PC-3 (cell line): ENCODE measurements at regions of chr11 and their contacts with region 1.

Region 1: GRCh38 chr11:110195845-110196754 is 100.3 kb downstream of the RDX start:
- DNase-seq: peak; percentile 97
- ATAC-seq: peak; percentile 77
- H3K4me3 ChIP-seq: no peak overlapping the region; the same call in 1 of the 2 replicates
- H3K27ac ChIP-seq: peak overlapping the region; percentile 92
- H3K4me1 ChIP-seq: peaks cover 75% of the 10 kb centered on the region
- H3K27me3 ChIP-seq: no peaks in the 10 kb centered on the region
- CTCF ChIP-seq: no peak

Region 2: DNA sequence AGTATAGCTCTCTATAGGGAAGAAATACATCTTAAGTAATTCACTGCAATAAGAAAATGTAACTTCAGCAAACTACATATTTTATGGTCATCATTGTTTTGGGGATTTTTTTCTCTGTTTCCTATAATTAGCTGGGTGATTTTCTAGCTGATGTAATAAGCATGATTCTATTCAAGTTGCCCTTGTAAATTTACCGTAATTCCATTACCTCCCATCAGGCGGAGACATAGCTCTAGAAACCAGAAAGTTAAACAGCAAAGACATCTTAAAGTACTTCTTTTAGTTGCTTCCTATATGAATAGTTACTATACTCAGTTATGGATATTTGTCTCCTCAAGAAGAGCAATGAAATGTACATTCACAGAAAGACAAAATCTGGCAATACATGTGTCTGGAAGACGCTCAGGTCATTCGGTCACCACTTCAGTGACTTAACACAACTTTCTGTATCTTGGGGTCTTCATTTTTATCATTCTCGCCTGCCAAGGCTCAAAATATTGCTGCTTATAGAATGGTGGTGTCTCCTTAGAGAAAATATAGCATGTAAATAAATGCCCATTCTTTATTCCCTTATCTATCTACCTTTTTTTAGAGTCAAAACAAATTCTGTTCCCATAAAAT is 342.8 kb before region 1 on chr11:
- CTCF ChIA-PET with region 1: no interaction called
- POLR2A ChIA-PET with region 1: no interaction called
- intact Hi-C with region 1: loop called (anchors 2 kb)
- DNase-seq: peak; percentile 88
- ATAC-seq: peak; percentile 57
- H3K4me3 ChIP-seq: no peak overlapping the region
- H3K27ac ChIP-seq: no peak overlapping the region
- H3K4me1 ChIP-seq: peaks cover 12% of the 10 kb centered on the region
- H3K27me3 ChIP-seq: no peaks in the 10 kb centered on the region
- CTCF ChIP-seq: peak; percentile 94

Region 3: DNA sequence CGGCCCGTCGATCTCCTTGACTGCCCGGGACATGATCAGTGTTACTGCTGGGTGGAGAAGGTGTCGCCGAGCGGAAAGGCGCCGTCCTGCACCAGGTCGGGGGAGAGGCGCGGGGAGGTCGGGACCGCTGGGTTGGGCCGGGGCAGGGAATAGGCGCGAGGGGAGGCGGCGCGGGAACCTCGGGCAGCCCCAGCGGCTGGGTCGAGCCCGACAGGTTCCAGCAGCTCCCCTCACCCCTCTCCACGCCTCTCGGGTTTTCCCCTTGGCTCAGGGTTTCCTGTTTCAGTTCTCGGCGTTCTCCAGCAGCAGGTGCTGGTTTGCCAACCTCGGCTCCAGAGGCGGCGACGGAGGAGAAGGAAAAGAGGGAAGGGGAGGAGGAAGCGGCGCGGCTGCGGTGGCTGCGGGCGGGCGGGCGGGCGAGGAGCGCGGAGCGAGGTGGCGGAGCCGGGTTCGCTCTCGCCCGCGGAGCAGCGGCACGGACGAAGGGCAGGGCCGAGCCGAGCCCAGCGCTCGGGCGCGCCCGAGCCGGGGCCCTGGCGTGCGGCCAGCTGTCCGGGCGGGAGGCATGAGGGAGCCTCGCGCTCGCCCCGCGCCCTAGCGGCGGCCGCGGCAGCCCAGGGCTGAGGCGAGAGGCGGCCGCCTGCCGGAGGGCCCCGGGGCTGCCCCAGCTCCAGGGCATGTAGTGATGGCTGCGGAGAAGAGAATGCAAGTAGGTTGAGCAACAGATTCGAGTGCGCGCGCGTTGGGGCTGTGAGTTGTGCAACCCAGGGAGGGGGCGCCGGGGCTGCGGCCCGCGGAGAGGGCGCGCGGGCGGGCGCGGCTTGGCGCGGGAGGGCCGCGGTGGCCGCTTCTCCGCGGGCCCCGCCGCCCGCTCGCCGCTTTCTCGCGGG is 103.3 kb before region 1 on chr11 and contains the start of gene ZC3H12C:
- CTCF ChIA-PET with region 1: no interaction called
- POLR2A ChIA-PET with region 1: interaction called, 5 read pairs
- intact Hi-C with region 1: loop called (anchors 2 kb)
- DNase-seq: peak; percentile 96
- ATAC-seq: peak; percentile 66
- H3K4me3 ChIP-seq: peak within 1 kb of the TSS; percentile 83
- H3K27ac ChIP-seq: peak within 1 kb of the TSS; percentile 95
- H3K4me1 ChIP-seq: peaks cover 42% of the 10 kb centered on the region
- H3K27me3 ChIP-seq: no peaks in the 10 kb centered on the region
- CTCF ChIP-seq: no peak
- total RNA-seq, gene ZC3H12C: 25.2 and 30.7 TPM in 2 replicates

Region 4: GRCh38 chr11:110148775-110149744 is 47.0 kb before region 1 on chr11:
- CTCF ChIA-PET with region 1: no interaction called
- POLR2A ChIA-PET with region 1: no interaction called
- intact Hi-C with region 1: no loop called
- DNase-seq: peak; percentile 90
- ATAC-seq: peak; percentile 89
- H3K4me3 ChIP-seq: no peak overlapping the region
- H3K27ac ChIP-seq: peak overlapping the region; percentile 93
- H3K4me1 ChIP-seq: peaks cover 30% of the 10 kb centered on the region
- H3K27me3 ChIP-seq: no peaks in the 10 kb centered on the region
- CTCF ChIP-seq: no peak

Region 5: DNA sequence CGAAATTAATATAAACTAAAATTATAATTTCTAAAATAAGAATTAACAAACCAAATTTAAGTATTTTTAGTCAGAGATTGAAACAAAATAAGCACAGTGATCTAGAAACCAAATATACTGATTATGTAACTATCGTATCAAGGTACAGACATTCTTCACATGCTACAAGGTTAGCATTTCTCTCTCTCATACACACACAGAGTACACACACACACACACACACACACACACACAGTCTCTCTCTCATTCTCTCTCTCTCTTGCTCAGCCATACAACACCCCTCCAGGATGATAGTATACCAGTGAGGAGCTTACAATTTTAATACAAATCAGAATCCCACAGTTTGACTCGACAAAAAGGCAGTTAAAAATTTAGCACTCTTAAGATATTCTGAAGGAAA is 34.3 kb after region 1 on chr11:
- CTCF ChIA-PET with region 1: no interaction called
- POLR2A ChIA-PET with region 1: no interaction called
- intact Hi-C with region 1: no loop called
- DNase-seq: no peak
- ATAC-seq: no peak
- H3K4me3 ChIP-seq: no peak overlapping the region
- H3K27ac ChIP-seq: no peak overlapping the region
- H3K4me1 ChIP-seq: no peaks in the 10 kb centered on the region
- H3K27me3 ChIP-seq: no peaks in the 10 kb centered on the region
- CTCF ChIP-seq: no peak

Region 6: DNA sequence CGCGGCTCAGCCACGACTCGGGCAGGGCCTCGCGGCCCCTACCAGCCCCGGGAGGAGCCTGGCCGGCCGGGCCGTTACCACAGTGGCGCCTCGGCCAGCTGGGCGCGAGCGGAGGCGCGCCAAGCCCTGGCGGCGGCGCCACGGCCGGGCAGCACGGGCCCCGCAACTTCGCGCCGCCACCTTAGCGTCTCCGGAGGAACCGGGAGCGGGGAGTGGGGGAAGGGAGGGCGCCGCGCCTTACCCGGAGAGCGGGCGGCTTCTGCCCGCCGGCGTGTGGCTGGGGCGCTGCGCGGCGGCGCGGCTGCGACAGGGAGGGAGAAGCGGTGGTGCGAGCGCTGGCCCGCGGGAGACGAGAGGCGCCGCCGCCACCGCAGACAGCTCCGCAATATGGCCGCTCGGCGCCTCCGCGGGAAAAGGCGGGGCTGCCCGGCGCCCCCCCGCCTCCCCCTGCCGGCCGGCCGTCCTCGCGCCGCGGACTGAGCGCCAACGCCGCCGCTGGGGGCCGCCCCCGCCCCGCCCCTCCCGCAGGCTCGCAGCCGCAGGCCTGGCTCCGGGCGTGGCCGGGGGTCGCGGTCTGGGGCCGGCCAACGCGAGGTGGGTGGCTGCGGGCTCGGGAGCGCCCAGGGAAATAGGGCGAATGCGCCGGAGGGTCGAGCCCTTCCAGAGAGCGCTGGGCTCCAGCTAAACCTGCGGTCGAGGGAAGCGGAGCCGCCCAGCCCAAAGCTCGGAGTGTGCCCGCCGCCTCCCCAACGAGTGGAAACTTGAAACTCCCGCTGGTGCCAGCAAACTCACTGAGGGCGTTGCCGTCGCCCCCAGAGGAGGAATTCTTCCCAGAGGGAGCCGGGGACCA is 100.4 kb after region 1 on chr11 and contains the start of gene RDX:
- CTCF ChIA-PET with region 1: interaction called, 8 read pairs
- POLR2A ChIA-PET with region 1: interaction called, 3 read pairs
- intact Hi-C with region 1: loop called (anchors 2 kb)
- DNase-seq: peak; percentile 88
- ATAC-seq: peak; percentile 72
- H3K4me3 ChIP-seq: peak within 1 kb of the TSS; percentile 97
- H3K27ac ChIP-seq: peak within 1 kb of the TSS; percentile 91
- H3K4me1 ChIP-seq: peaks cover 48% of the 10 kb centered on the region
- H3K27me3 ChIP-seq: no peaks in the 10 kb centered on the region
- CTCF ChIP-seq: no peak
- total RNA-seq, gene RDX: 86.2 and 131 TPM in 2 replicates

Region 7: DNA sequence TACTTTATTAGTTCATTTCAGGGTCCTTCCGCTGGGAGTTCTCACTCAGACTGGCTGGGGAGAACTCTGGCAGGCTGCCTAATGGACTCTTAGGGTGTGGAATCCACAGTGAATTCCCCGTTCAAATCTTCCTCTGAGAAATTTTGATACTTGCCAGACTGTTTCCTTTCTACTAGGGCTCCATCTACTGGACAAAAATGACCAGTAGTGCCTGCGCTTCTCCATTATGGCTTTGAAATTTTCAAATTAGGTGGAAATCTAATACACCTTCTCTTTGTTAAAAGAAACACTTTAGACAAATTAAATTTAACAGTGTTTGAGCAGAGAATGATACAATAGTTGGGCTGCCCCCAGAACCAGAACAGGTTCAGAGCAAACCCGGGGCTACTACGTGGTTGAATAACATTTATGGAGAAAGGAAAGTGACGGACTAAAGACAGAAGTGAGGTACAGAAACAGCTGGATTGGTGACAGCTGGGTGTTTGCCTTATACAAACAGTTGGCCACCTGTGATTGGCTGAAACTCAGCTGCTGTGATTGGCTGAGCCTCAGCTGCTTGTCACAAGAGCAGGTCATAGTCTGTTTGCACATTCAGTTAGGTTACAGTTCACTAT is 180.7 kb after region 1 on chr11:
- CTCF ChIA-PET with region 1: interaction called, 13 read pairs
- POLR2A ChIA-PET with region 1: no interaction called
- intact Hi-C with region 1: loop called (anchors 1 kb)
- DNase-seq: peak; percentile 91
- ATAC-seq: peak; percentile 84
- H3K4me3 ChIP-seq: peak overlapping the region; percentile 65
- H3K27ac ChIP-seq: 0 out of 2 replicates have a peak overlapping the region, but pooled peaks have one; percentile 9
- H3K4me1 ChIP-seq: peaks cover 21% of the 10 kb centered on the region
- H3K27me3 ChIP-seq: no peaks in the 10 kb centered on the region
- CTCF ChIP-seq: peak; percentile 98

Region 8: GRCh38 chr11:110447897-110448745 is 252.0 kb after region 1 on chr11:
- CTCF ChIA-PET with region 1: no interaction called
- POLR2A ChIA-PET with region 1: no interaction called
- intact Hi-C with region 1: loop called (anchors 5 kb)
- DNase-seq: peak; percentile 88
- ATAC-seq: peak; percentile 49; the same call in 1 of the 2 replicates
- H3K4me3 ChIP-seq: no peak overlapping the region
- H3K27ac ChIP-seq: peak overlapping the region; percentile 79
- H3K4me1 ChIP-seq: peaks cover 21% of the 10 kb centered on the region
- H3K27me3 ChIP-seq: no peaks in the 10 kb centered on the region
- CTCF ChIP-seq: peak; percentile 90

Region 9: DNA sequence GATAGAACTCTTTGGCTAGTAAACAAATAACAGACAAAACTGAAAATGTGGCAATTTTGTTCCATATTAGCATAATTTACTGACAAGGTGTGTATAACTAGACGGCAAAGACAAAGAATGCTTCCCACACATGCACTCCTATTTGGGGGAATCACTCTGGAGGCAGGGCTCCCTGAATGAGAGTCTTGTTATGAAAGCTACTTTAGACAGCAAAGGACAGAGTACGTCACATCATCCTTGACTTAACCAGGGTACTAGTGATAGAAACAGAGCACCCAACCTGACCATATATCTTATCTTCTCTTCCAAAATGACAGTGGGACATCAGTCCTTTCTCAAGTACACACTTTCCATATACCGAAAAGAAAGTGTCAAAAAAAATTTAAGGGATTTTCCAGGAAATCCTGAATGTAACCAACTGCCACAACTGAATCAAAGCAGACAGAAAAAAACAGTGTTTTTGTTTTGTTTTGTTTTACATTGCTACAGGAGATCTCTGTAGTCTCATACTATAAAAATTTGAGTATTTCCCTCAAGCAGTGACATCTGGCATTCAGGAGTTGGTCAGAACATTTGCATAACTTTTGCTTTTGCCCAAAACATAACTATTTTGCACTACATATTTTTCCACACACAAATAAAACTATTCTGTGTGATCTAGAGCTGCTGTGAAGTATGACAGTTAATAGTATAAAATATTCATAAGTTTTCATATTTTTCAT is 417.3 kb after region 1 on chr11:
- CTCF ChIA-PET with region 1: no interaction called
- POLR2A ChIA-PET with region 1: no interaction called
- intact Hi-C with region 1: no loop called
- DNase-seq: no peak
- ATAC-seq: no peak
- H3K4me3 ChIP-seq: no peak overlapping the region
- H3K27ac ChIP-seq: no peak overlapping the region
- H3K4me1 ChIP-seq: no peaks in the 10 kb centered on the region
- H3K27me3 ChIP-seq: peaks cover 37% of the 10 kb centered on the region
- CTCF ChIP-seq: no peak